ENCODE measurements at regions of chr9 and their contacts with region 1.

Region 1: GRCh38 chr9:114662081-114662989 is 4.7 kb upstream of the TEX53 start:
- DNase-seq: peak; percentile 34 to 76 (median 50)
- ATAC-seq: peak; percentile 86
- H3K4me3 ChIP-seq: no peak overlapping the region
- H3K4me3 Mint-ChIP-seq: no peak overlapping the region
- H3K27ac ChIP-seq: no peak overlapping the region
- H3K27ac Mint-ChIP-seq: no peak overlapping the region
- H3K4me1 ChIP-seq: no peaks in the 10 kb centered on the region
- H3K4me1 Mint-ChIP-seq: no peaks in the 10 kb centered on the region
- H3K27me3 ChIP-seq: peaks cover 0 to 5% of the 10 kb centered on the region in 2 experiments
- H3K27me3 Mint-ChIP-seq: peaks cover 13% of the 10 kb centered on the region
- CTCF ChIP-seq: peak; percentile 78

Region 2: DNA sequence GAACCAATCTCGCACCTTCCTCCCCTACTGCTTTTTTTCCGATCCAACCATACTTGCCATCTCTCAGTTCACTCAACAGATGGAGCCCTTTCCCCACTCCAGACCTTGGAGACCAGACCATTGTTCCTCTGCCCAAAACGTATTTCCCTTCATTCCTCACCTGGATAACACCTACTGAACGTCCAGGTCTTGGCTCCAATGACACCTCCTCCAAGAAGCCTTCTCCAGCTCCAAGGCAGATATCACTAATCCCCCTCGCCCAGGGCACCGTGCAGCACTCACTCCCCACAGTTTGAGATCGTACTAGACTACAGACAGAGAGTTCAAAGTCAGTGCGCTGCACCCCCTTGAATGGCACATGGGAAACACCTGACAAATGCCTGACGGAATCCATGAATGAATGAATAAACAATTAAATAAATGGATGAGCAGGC is 227.4 kb before region 1 on chr9:
- CTCF ChIA-PET with region 1: no interaction called
- POLR2A ChIA-PET with region 1: no interaction called
- intact Hi-C with region 1: no loop called
- DNase-seq: peak in 4 of 14 experiments; percentile 16 to 47 (median 31)
- ATAC-seq: no peak
- H3K4me3 ChIP-seq: no peak overlapping the region
- H3K4me3 Mint-ChIP-seq: no peak overlapping the region
- H3K27ac ChIP-seq: no peak overlapping the region
- H3K27ac Mint-ChIP-seq: no peak overlapping the region
- H3K4me1 ChIP-seq: peaks cover 9% of the 10 kb centered on the region
- H3K4me1 Mint-ChIP-seq: peaks cover 5% of the 10 kb centered on the region
- H3K27me3 ChIP-seq: no peaks in the 10 kb centered on the region
- H3K27me3 Mint-ChIP-seq: no peaks in the 10 kb centered on the region
- CTCF ChIP-seq: peak; percentile 45

Region 3: GRCh38 chr9:115524453-115525059 is 862.2 kb after region 1 on chr9:
- CTCF ChIA-PET with region 1: no interaction called
- POLR2A ChIA-PET with region 1: no interaction called
- intact Hi-C with region 1: loop called (anchors 5 kb)
- DNase-seq: peak in 4 of 14 experiments; percentile 11 to 47 (median 40)
- ATAC-seq: no peak
- H3K4me3 ChIP-seq: no peak overlapping the region
- H3K4me3 Mint-ChIP-seq: no peak overlapping the region
- H3K27ac ChIP-seq: no peak overlapping the region
- H3K27ac Mint-ChIP-seq: no peak overlapping the region
- H3K4me1 ChIP-seq: no peaks in the 10 kb centered on the region
- H3K4me1 Mint-ChIP-seq: no peaks in the 10 kb centered on the region
- H3K27me3 ChIP-seq: peaks cover 0 to 11% of the 10 kb centered on the region in 2 experiments
- H3K27me3 Mint-ChIP-seq: peaks cover 44% of the 10 kb centered on the region
- CTCF ChIP-seq: peak; percentile 33

Region 4: GRCh38 chr9:116661037-116661954 is 1999.0 kb after region 1 on chr9:
- CTCF ChIA-PET with region 1: no interaction called
- POLR2A ChIA-PET with region 1: no interaction called
- intact Hi-C with region 1: loop called in 1 of 2 experiments (anchors 5 kb)
- DNase-seq: peak in 4 of 14 experiments; percentile 0 to 61 (median 45)
- ATAC-seq: no peak
- H3K4me3 ChIP-seq: no peak overlapping the region
- H3K4me3 Mint-ChIP-seq: no peak overlapping the region
- H3K27ac ChIP-seq: no peak overlapping the region
- H3K27ac Mint-ChIP-seq: no peak overlapping the region
- H3K4me1 ChIP-seq: no peaks in the 10 kb centered on the region
- H3K4me1 Mint-ChIP-seq: no peaks in the 10 kb centered on the region
- H3K27me3 ChIP-seq: no peaks in the 10 kb centered on the region
- H3K27me3 Mint-ChIP-seq: no peaks in the 10 kb centered on the region
- CTCF ChIP-seq: peak; percentile 59

Measured in CD4-positive, alpha-beta T cell (primary cell).